CD14-positive monocyte (primary cell): ENCODE measurements at regions of chr15 and their contacts with region 1.

Region 1: DNA sequence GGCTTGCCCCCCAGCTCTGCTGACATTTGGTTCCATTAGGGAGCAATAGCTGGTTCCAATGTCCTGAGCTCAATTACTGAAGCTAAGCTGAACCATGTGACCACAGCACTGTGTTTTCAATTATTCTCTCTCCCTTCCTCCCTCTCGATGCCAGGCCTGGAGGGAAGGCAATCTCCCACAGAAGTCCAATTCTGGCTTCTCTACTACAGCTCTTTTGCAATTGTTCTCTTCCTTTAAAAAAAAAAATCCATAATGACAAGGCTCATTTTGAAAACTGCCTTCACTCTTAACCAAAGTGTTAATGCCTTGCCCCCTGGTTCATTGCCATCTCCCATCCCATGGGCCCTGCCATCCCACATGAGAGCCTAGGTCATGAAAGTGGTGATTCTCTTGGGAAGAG is 24.8 kb downstream of the IL16 start:
- DNase-seq: no peak
- H3K4me3 ChIP-seq: no peak overlapping the region
- H3K4me3 Mint-ChIP-seq: no peak overlapping the region
- H3K27ac ChIP-seq: no peak overlapping the region
- H3K27ac Mint-ChIP-seq: no peak overlapping the region
- H3K4me1 ChIP-seq: no peaks in the 10 kb centered on the region
- H3K4me1 Mint-ChIP-seq: peaks cover 6% of the 10 kb centered on the region
- H3K27me3 ChIP-seq: no peaks in the 10 kb centered on the region
- H3K27me3 Mint-ChIP-seq: peaks cover 0 to 2% (median 0%) of the 10 kb centered on the region in 3 donors
- CTCF ChIP-seq: no peak

Region 2: DNA sequence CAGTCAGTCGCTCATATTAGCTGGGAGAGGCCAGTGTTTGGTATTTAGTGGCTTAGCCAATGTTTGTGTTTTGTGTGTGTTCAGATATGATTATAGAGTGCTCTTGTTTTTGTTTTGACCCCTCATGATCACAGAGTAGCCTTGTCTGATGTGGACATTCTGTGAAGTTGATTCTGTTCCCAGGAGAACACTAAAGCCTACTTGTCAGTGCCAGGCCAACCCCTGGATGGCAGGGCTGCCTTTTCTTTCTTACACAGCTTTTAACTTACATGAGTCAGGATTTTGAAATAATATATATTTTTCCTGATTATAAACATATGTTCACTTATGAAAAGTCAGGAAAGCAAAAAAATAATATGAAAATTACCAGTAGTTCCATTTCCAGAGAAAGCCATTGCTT is 75.4 kb before region 1 on chr15:
- intact Hi-C with region 1: no loop called
- DNase-seq: no peak
- H3K4me3 ChIP-seq: no peak overlapping the region
- H3K4me3 Mint-ChIP-seq: no peak overlapping the region
- H3K27ac ChIP-seq: no peak overlapping the region
- H3K27ac Mint-ChIP-seq: no peak overlapping the region
- H3K4me1 ChIP-seq: no peaks in the 10 kb centered on the region
- H3K4me1 Mint-ChIP-seq: peaks cover 2% of the 10 kb centered on the region
- H3K27me3 ChIP-seq: no peaks in the 10 kb centered on the region
- H3K27me3 Mint-ChIP-seq: peaks cover 3 to 11% (median 9%) of the 10 kb centered on the region in 3 donors
- CTCF ChIP-seq: no peak

Region 3: DNA sequence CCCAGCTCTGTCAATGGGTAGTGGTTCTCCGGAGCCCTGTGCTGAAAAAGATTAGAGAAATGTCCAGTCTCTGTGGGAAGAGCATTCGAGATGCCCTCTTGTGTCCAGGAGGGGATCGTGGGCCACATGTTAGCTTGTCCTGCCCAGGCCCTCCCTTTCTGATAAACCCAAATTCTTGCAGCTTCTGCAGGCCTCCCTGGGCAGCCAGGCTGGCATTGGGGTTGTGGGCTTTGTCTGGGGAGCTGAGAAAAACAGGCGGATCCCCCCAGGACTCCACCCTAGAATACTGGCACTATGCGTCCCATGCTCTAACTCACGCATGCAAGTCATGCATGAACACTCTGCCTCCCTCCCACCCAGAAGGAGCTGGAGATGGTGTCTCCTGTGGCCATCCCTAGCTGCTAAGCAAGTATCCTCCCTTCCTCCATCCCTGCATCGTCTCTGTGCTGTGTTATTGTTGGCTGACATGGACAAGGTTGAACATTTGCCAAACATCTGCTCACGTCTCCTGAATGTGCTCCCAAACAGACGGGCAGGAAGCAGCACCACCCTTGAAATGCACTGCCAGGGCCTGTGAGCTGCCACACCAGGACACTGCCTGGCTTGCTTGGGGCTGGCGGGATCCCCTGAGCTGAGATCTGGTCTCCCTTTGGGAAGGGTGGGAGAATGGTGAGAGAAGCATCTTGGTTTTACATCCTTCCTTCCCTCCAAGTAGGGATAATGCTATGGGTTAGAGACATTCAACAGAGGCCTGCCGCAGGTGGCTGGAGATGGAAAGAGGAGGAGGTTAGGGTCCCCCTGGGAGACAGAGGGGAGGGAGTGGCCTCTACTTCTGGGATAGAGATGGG is 60.9 kb before region 1 on chr15:
- intact Hi-C with region 1: no loop called
- DNase-seq: no peak
- H3K4me3 ChIP-seq: no peak overlapping the region
- H3K4me3 Mint-ChIP-seq: no peak overlapping the region
- H3K27ac ChIP-seq: no peak overlapping the region
- H3K27ac Mint-ChIP-seq: no peak overlapping the region
- H3K4me1 ChIP-seq: no peaks in the 10 kb centered on the region
- H3K4me1 Mint-ChIP-seq: peaks cover 9% of the 10 kb centered on the region
- H3K27me3 ChIP-seq: no peaks in the 10 kb centered on the region
- H3K27me3 Mint-ChIP-seq: peaks cover 4 to 9% (median 4%) of the 10 kb centered on the region in 3 donors
- CTCF ChIP-seq: no peak

Region 4: DNA sequence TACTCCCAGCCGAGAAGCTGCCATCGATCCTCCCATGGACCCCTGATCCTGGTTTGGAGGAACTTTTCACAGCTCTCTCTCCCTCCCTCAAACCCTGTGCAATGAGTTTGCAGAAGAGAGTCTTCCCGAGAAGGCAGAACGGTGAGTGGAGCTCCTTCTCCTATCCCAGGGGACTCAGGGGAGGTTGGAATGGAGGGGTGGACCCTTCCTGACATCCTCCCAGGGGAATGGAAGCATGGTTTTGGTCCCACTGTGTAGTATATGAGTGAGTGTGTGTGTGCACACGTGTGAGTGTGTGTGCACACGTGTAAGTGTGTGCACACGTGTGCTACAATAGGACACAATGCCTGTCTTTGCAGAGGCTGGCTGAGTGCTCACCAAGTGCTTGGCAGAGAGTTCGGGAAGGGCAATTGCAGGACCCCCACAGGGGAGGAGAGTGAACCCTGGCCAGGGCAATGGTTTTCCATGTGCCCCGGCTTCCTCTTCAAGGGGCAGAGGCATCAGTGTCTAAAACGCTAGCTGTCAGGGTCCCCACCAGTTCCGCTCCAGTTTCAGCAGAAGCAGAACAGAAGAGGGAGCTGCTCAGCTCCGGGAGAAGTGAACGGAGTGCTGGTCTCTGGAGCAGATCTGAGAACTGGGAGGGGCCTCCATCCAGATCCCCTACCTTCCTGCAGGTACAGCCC is 38.6 kb before region 1 on chr15:
- intact Hi-C with region 1: loop called in 1 of 2 experiments (anchors 5 kb)
- DNase-seq: peak in 2 of 3 donors; percentile 10 to 11
- H3K4me3 ChIP-seq: peak overlapping the region in 1 of 3 experiments; percentile 47
- H3K4me3 Mint-ChIP-seq: peak overlapping the region; percentile 61 to 78
- H3K27ac ChIP-seq: no peak overlapping the region
- H3K27ac Mint-ChIP-seq: peak overlapping the region in 3 of 7 donors; percentile 20 to 55 (median 47)
- H3K4me1 ChIP-seq: peaks cover 15 to 19% of the 10 kb centered on the region in 2 donors
- H3K4me1 Mint-ChIP-seq: peaks cover 18% of the 10 kb centered on the region
- H3K27me3 ChIP-seq: peaks cover 2 to 17% of the 10 kb centered on the region in 2 donors
- H3K27me3 Mint-ChIP-seq: peaks cover 15 to 24% (median 19%) of the 10 kb centered on the region in 3 donors
- CTCF ChIP-seq: no peak